Breast epithelium (tissue), 4 donors: ENCODE measurements at regions of chr1 and their contacts with region 1.

Region 1: GRCh38 chr1:212455803-212456528 is 23.2 kb downstream of the NENF start:
- DNase-seq: peak; percentile 81 to 94
- H3K4me3 ChIP-seq: no peak overlapping the region
- H3K27ac ChIP-seq: peak overlapping the region in 1 of 2 donors; percentile 32
- H3K4me1 ChIP-seq: no peaks in the 10 kb centered on the region
- H3K27me3 ChIP-seq: no peaks in the 10 kb centered on the region
- CTCF ChIP-seq: peak; percentile 95 to 98 (median 97)
- POLR2A ChIP-seq: no peak

Region 2: GRCh38 chr1:212070720-212071302 is 385.2 kb before region 1 on chr1:
- intact Hi-C with region 1: loop called (anchors 10 kb)
- DNase-seq: no peak
- H3K4me3 ChIP-seq: no peak overlapping the region
- H3K27ac ChIP-seq: no peak overlapping the region
- H3K4me1 ChIP-seq: no peaks in the 10 kb centered on the region
- H3K27me3 ChIP-seq: no peaks in the 10 kb centered on the region
- CTCF ChIP-seq: peak; percentile 52 to 81 (median 77)
- POLR2A ChIP-seq: no peak

Region 3: DNA sequence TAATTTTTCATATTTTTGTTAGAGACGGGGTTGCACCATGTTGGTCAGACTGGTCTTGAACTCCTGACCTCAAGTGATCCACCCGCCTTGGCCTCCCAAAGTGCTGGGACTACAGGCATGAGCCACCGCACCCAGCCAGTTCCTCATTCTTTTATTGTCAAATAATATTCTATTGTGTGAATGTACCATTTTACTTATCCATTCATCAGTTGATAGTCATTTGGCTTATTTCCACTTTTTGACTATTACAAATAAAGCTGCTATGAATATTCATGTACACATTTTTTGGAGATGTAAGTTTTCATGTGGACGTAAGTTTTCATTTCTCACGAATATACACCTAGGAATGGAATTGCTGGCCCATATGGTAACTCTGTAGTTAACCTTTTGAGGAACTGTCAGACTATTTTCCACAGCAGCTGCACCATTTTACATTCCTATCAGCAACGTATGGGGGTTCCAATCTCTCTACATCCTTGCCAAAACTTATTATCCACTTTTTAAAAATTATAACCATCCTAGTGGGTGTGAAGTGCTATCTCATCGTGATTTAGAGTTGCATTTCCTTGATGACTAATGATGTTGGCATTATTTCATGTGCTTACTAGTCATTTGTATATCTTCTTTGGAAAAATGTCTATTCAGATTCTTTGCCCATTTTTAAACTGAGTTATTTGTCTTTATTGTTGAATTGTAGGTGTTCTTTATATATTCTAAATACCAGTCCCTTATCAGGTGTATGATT is 54.0 kb before region 1 on chr1:
- intact Hi-C with region 1: no loop called
- DNase-seq: no peak
- H3K4me3 ChIP-seq: no peak overlapping the region
- H3K27ac ChIP-seq: no peak overlapping the region
- H3K4me1 ChIP-seq: no peaks in the 10 kb centered on the region
- H3K27me3 ChIP-seq: no peaks in the 10 kb centered on the region
- CTCF ChIP-seq: no peak
- POLR2A ChIP-seq: no peak

Region 4: GRCh38 chr1:212440419-212440818 is 15.5 kb before region 1 on chr1:
- intact Hi-C with region 1: no loop called
- DNase-seq: no peak
- H3K4me3 ChIP-seq: no peak overlapping the region
- H3K27ac ChIP-seq: no peak overlapping the region
- H3K4me1 ChIP-seq: no peaks in the 10 kb centered on the region
- H3K27me3 ChIP-seq: no peaks in the 10 kb centered on the region
- CTCF ChIP-seq: no peak
- POLR2A ChIP-seq: no peak